Common myeloid progenitor, CD34-positive (primary cell): ENCODE measurements at regions of chr11 and their contacts with region 1.

Region 1: GRCh38 chr11:1750313-1750839 is at the start of gene IFITM10:
- DNase-seq: peak in 1 of 3 donors; percentile 33
- H3K4me3 ChIP-seq: peak within 1 kb of the TSS in 1 of 7 experiments; percentile 19
- H3K27ac ChIP-seq: no peak within 1 kb of the TSS
- H3K4me1 ChIP-seq: peaks cover 0 to 75% (median 69%) of the 10 kb centered on the region in 4 experiments
- H3K27me3 ChIP-seq: peaks cover 0 to 28% (median 5%) of the 10 kb centered on the region in 5 experiments

Region 2: DNA sequence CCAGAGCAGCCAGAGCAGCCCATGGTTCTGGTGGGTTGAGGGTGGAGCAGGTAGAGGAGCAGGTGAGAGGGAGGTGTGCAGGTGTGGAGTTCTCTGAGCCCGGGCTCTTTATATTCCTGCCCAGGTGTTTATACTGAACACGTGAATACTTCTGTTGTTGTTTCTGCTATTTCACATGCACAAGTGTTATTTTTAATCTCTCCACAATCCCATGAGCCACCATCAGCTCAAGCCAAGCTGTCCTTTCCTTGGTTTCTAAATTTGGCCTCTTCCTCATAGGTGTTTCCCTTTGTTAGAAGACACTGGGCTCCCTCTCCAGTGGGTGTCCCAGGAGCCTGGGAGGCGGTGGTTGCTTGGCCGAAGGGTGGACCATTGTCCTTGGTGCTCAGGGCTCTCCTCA is 142.0 kb before region 1 on chr11 and contains the start of gene KRTAP5-3:
- CTCF ChIA-PET with region 1: no interaction called
- POLR2A ChIA-PET with region 1: no interaction called
- DNase-seq: no peak
- H3K4me3 ChIP-seq: no peak within 1 kb of the TSS
- H3K27ac ChIP-seq: no peak within 1 kb of the TSS
- H3K4me1 ChIP-seq: no peaks in the 10 kb centered on the region
- H3K27me3 ChIP-seq: peaks cover 0 to 35% (median 9%) of the 10 kb centered on the region in 5 experiments

Region 3: GRCh38 chr11:1760351-1761109 is 10.2 kb after region 1 on chr11:
- CTCF ChIA-PET with region 1: interaction called, 16 read pairs
- POLR2A ChIA-PET with region 1: interaction called, 5 read pairs
- DNase-seq: peak in 2 of 3 donors; percentile 67 to 73
- H3K4me3 ChIP-seq: peak overlapping the region in 3 of 7 experiments; percentile 45 to 87 (median 45)
- H3K27ac ChIP-seq: peak overlapping the region in 1 of 2 experiments; percentile 75
- H3K4me1 ChIP-seq: peaks cover 2 to 88% (median 85%) of the 10 kb centered on the region in 4 experiments
- H3K27me3 ChIP-seq: no peaks in the 10 kb centered on the region